Activated naive CD4-positive, alpha-beta T cell treated with anti-CD3 and anti-CD28 coated beads for 36 hours (primary cell): ENCODE measurements at regions of chr4 and their contacts with region 1.

Region 1: DNA sequence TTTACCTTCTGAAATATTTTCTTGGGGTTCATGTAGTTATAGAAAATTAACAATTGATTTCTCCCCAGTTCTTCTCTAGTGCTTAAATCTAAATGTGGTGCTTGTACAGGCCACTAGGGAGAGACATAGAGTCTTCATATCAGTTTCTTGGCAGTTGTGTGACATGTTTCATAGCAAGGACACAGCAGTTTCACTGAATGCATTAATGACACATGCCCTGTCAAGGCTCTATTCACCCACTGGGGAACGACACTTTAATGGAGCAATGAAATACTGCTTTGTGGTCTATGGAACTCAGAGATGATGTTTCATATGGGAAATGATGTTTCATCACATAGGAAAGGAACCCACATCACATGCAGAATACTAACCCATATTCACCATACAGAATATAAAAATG is 2.8 kb downstream of the VEGFC start:
- DNase-seq: no peak
- H3K4me3 Mint-ChIP-seq: no peak overlapping the region
- H3K27ac Mint-ChIP-seq: no peak overlapping the region
- H3K4me1 Mint-ChIP-seq: peaks cover 5% of the 10 kb centered on the region
- H3K27me3 Mint-ChIP-seq: peaks cover 46% of the 10 kb centered on the region

Region 2: DNA sequence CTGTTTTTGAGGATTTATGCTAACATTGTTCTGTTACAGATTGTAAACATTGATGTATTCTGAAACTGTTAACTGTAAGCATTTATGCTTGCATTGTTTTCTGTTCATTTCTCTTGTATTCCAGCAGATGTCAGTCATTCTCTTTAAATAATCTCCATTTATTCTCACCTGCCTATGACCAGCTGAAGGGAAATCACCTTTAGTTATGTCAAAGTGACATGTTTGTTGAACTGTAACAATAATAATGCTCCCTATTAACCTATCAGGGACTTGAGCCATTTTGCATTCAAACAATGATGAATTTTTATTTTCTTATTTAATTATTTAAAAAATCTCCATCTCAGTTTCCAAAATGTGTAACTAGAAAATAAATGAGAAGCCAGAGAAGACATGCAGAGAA is 412.2 kb before region 1 on chr4:
- CTCF ChIA-PET with region 1: no interaction called
- intact Hi-C with region 1: loop called (anchors 2 kb)
- DNase-seq: no peak
- H3K4me3 Mint-ChIP-seq: no peak overlapping the region
- H3K27ac Mint-ChIP-seq: no peak overlapping the region
- H3K4me1 Mint-ChIP-seq: no peaks in the 10 kb centered on the region
- H3K27me3 Mint-ChIP-seq: peaks cover 3% of the 10 kb centered on the region

Region 3: DNA sequence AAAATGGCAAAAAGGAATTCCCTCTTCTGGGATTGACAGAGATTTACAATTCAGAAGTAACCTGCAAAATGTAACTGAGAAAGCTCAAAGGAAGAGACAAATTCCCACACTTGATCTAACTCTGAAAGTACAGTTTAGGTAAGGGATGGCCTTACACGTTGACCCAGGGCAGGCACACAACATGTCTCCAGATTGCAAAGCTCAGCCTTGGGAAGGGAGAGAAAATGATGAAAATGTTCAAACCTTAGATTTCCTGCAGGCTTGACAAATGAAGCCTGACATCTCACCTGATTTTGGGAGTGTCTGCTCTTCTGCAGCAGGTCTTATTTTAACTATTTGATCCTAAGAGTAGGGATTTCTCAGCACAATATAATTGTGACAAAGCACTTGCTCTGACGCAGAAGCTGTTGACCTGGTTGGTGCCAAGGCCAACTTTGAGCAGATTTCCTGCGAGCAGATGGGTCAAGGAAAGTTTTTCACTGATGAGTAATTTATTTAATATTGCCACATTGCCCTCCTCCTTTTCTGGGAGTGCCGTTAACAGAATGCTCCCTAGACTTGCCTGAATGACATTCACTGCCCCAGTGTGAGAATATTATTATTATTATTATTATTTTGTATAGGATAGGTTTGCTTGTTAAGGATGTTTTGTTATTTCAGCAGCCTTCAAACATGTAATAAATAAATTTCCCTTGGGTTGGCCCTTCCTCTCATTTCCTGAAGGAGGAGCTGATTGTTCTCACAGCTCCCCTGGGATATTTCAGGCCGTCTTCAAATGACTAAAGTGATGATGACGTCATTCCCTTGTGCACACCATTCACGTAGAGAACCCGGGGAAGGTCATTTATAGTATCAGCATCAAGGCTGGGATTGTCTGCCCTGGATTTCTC is 154.3 kb before region 1 on chr4:
- CTCF ChIA-PET with region 1: no interaction called
- intact Hi-C with region 1: no loop called
- DNase-seq: no peak
- H3K4me3 Mint-ChIP-seq: no peak overlapping the region
- H3K27ac Mint-ChIP-seq: no peak overlapping the region
- H3K4me1 Mint-ChIP-seq: no peaks in the 10 kb centered on the region
- H3K27me3 Mint-ChIP-seq: peaks cover 4% of the 10 kb centered on the region

Region 4: DNA sequence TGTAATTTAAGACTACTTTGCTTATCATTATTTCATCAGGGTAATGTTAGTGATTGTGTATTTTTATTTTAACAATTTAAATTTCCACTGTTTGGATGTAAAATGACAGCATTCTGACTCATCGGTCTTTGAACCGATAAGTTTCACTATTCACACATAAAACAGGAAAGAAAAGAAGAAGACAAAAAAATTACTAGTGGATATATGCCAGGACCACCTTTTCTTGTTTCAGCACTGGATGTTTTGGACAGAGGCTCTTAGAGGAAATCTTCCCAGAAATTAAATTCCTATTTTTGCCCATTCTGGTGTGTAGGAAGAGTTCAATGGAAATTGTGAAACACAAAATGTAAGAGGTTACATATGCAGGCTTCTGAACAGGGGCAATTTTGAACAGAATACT is 54.7 kb before region 1 on chr4:
- CTCF ChIA-PET with region 1: no interaction called
- intact Hi-C with region 1: loop called (anchors 10 kb)
- DNase-seq: no peak
- H3K4me3 Mint-ChIP-seq: no peak overlapping the region
- H3K27ac Mint-ChIP-seq: no peak overlapping the region
- H3K4me1 Mint-ChIP-seq: no peaks in the 10 kb centered on the region
- H3K27me3 Mint-ChIP-seq: no peaks in the 10 kb centered on the region

Region 5: GRCh38 chr4:176902710-176903323 is 112.9 kb after region 1 on chr4:
- CTCF ChIA-PET with region 1: no interaction called
- intact Hi-C with region 1: loop called (anchors 5 kb)
- DNase-seq: no peak
- H3K4me3 Mint-ChIP-seq: no peak overlapping the region
- H3K27ac Mint-ChIP-seq: no peak overlapping the region
- H3K4me1 Mint-ChIP-seq: peaks cover 4% of the 10 kb centered on the region
- H3K27me3 Mint-ChIP-seq: no peaks in the 10 kb centered on the region